ENCODE measurements at regions of chrX and their contacts with region 1.

Region 1: DNA sequence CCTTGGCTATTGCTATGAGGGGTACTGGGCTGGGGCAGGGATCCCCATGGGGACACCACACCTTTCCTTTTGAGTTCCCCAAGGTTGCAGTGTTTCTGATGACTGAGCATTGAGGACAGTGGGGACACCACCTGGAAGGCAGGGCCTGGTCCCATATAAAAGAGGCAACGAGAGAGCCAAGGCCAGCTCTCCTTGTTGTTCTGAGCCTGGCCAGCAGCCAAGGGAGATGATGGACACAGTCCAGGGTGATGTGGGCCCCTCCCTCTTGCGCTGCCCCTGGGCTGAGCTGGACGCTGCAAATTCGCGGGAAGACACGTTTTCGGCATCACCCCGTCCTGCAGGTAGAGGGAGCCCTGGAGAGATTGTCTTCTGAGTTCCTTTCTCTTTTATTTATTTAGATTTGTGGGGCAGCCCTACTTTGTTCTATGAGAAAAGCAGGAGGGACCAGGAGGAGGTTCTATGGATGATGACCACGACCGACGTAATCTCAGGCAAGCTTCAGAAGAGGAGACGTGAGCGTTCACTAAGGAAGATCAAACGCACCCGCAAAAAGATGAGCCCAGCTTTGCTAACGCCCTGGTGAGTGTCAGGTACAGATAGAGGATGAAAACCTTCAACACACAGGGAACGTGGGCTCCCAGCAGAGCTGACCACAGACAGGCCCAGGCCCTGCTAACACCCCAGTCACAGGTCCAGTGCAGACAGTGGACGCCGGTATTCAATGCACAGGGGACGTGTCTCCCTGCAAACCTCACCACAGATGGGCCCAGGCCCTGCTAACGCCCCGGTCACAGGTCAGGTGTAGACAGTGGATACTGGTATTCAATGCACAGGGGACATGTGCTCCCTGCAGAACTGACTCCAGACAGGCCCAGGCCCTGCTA is 97.4 kb downstream of the SHOX start:
- DNase-seq: peak; percentile 34
- ATAC-seq: peak; percentile 52
- H3K4me3 Mint-ChIP-seq: no peak overlapping the region
- H3K27ac Mint-ChIP-seq: no peak overlapping the region
- H3K4me1 Mint-ChIP-seq: no peaks in the 10 kb centered on the region
- H3K27me3 Mint-ChIP-seq: no peaks in the 10 kb centered on the region

Region 2: GRCh38 chrX:572537-573124 is 155.3 kb before region 1 on chrX:
- CTCF ChIA-PET with region 1: no interaction called
- POLR2A ChIA-PET with region 1: no interaction called
- intact Hi-C with region 1: loop called in 1 of 2 experiments (anchors 10 kb)
- DNase-seq: no peak
- ATAC-seq: peak; percentile 24
- H3K4me3 Mint-ChIP-seq: no peak overlapping the region
- H3K27ac Mint-ChIP-seq: no peak overlapping the region
- H3K4me1 Mint-ChIP-seq: no peaks in the 10 kb centered on the region
- H3K27me3 Mint-ChIP-seq: no peaks in the 10 kb centered on the region